Body of pancreas (tissue), 4 donors: ENCODE measurements at regions of chr1 and their contacts with region 1.

Region 1: GRCh38 chr1:156689035-156689952 is 12.1 kb upstream of the NES start:
- DNase-seq: peak; percentile 77 to 83 (median 82)
- ATAC-seq: peak; percentile 85
- H3K4me3 ChIP-seq: no peak overlapping the region
- H3K27ac ChIP-seq: no peak overlapping the region
- H3K4me1 ChIP-seq: peaks cover 30% of the 10 kb centered on the region
- H3K27me3 ChIP-seq: no peaks in the 10 kb centered on the region
- CTCF ChIP-seq: peak; percentile 88 to 94 (median 94)
- POLR2A ChIP-seq: no peak

Region 2: GRCh38 chr1:156721535-156721934 is 32.2 kb after region 1 on chr1:
- intact Hi-C with region 1: loop called (anchors 5 kb)
- DNase-seq: no peak
- ATAC-seq: no peak
- H3K4me3 ChIP-seq: no peak overlapping the region
- H3K27ac ChIP-seq: no peak overlapping the region
- H3K4me1 ChIP-seq: peaks cover 23% of the 10 kb centered on the region
- H3K27me3 ChIP-seq: no peaks in the 10 kb centered on the region
- CTCF ChIP-seq: no peak
- POLR2A ChIP-seq: no peak

Region 3: DNA sequence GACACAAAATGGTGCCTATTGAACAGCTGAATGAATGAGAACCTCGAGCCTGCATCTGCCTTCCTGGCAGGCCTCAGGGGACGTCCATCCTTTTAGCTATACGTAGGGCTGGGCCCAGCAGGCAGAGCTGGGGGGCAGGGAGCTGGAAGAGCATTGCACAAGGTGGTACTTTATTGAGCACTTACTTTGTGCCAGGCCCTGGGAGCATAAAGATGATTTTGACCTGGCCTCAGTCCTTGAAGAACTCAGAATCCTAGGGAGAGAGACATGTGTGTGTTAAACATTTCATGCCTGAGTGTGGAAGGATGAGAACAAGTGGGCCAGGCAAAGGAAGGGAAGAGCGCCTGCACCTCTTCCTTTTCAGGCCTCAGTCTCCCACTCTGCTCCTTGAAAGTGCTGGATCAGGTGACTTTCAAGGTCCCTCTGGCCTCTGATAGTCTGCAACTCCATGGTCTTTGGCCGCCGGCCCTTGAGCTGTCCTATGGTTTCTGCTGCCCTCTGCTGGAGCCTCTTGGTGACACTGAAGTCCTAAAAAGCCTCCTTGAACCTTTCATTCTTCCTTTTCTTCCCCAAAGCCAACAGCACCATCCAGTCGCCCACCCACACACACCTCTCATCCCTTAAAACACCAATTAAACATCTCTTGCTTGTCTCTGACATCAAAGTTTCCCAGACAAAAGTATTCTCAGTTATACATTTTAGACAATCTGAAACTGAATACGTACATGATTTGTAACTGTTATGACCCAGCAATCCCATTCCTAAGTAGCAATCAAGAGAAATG is 200.7 kb after region 1 on chr1:
- intact Hi-C with region 1: loop called (anchors 10 kb)
- DNase-seq: peak; percentile 85 to 92 (median 86)
- ATAC-seq: peak; percentile 75
- H3K4me3 ChIP-seq: no peak overlapping the region
- H3K27ac ChIP-seq: no peak overlapping the region
- H3K4me1 ChIP-seq: peaks cover 12% of the 10 kb centered on the region
- H3K27me3 ChIP-seq: peaks cover 0 to 13% of the 10 kb centered on the region in 2 donors
- CTCF ChIP-seq: peak; percentile 69 to 81 (median 78)
- POLR2A ChIP-seq: no peak